ENCODE measurements at regions of chr9 and their contacts with region 1.

Region 1: GRCh38 chr9:137029058-137029936 is 1.3 kb upstream of the ABCA2 start:
- DNase-seq: peak; percentile 50
- H3K4me3 ChIP-seq: peak overlapping the region in 1 of 3 experiments; percentile 57
- H3K27ac ChIP-seq: no peak overlapping the region
- H3K4me1 ChIP-seq: peaks cover 42% of the 10 kb centered on the region
- H3K27me3 ChIP-seq: no peaks in the 10 kb centered on the region
- CTCF ChIP-seq: peak; percentile 88 to 90

Region 2: DNA sequence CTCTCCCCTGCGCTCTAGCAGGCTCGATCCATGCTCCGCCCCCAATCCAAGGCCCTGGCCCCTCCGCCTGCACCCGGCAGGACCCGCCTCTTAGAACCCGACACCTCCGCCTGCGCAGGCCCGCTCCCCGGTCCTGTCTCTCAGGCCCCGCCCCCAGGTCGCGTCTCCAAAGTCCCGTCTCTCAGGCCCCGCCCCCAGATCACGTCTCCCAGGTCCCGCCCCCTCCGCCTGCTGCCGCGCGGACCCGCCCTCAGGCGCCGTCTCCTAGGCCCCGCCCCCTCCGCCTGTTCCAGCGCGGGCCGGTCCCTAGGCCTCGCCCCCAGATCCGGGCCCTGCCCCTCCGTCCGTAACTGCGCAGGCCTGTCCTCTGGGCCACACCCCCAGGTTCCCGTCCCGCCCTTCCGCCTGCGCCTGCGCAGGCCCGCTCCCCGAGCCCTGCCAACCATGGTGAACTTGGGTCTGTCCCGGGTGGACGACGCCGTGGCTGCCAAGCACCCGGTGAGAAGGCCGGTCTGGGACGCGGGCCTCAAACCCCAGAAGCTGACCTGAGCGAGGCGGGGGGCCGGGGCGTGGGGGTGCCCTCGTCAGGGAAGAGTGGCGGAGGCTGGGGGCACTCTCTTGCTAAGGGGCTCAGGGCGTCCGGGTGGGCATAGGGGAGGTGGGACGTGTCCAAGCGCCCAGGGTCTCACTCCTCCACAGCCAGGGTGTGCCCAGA is 238.2 kb before region 1 on chr9 and contains the start of gene TMEM141:
- CTCF ChIA-PET with region 1: no interaction called
- dilution Hi-C with region 1: no loop called
- in situ Hi-C with region 1: loop called (anchors 10 to 25 kb)
- intact Hi-C with region 1: loop called (anchors 1 kb)
- DNase-seq: peak; percentile 98
- H3K4me3 ChIP-seq: peak within 1 kb of the TSS; percentile 72 to 93 (median 77)
- H3K27ac ChIP-seq: peak within 1 kb of the TSS; percentile 88
- H3K4me1 ChIP-seq: peaks cover 18% of the 10 kb centered on the region
- H3K27me3 ChIP-seq: no peaks in the 10 kb centered on the region
- CTCF ChIP-seq: no peak
- total RNA-seq, gene TMEM141: 38.8 to 95.4 TPM

Region 3: GRCh38 chr9:136840140-136840687 is 189.1 kb before region 1 on chr9:
- CTCF ChIA-PET with region 1: no interaction called
- dilution Hi-C with region 1: loop called (anchors 5 kb)
- in situ Hi-C with region 1: no loop called
- intact Hi-C with region 1: no loop called
- DNase-seq: no peak
- H3K4me3 ChIP-seq: no peak overlapping the region
- H3K27ac ChIP-seq: no peak overlapping the region
- H3K4me1 ChIP-seq: peaks cover 25% of the 10 kb centered on the region
- H3K27me3 ChIP-seq: peaks cover 5% of the 10 kb centered on the region
- CTCF ChIP-seq: no peak

Region 4: GRCh38 chr9:136928591-136928990 is 100.7 kb before region 1 on chr9:
- CTCF ChIA-PET with region 1: no interaction called
- dilution Hi-C with region 1: loop called (anchors 5 kb)
- in situ Hi-C with region 1: no loop called
- intact Hi-C with region 1: no loop called
- DNase-seq: no peak
- H3K4me3 ChIP-seq: no peak overlapping the region
- H3K27ac ChIP-seq: no peak overlapping the region
- H3K4me1 ChIP-seq: no peaks in the 10 kb centered on the region
- H3K27me3 ChIP-seq: no peaks in the 10 kb centered on the region
- CTCF ChIP-seq: no peak

Region 5: DNA sequence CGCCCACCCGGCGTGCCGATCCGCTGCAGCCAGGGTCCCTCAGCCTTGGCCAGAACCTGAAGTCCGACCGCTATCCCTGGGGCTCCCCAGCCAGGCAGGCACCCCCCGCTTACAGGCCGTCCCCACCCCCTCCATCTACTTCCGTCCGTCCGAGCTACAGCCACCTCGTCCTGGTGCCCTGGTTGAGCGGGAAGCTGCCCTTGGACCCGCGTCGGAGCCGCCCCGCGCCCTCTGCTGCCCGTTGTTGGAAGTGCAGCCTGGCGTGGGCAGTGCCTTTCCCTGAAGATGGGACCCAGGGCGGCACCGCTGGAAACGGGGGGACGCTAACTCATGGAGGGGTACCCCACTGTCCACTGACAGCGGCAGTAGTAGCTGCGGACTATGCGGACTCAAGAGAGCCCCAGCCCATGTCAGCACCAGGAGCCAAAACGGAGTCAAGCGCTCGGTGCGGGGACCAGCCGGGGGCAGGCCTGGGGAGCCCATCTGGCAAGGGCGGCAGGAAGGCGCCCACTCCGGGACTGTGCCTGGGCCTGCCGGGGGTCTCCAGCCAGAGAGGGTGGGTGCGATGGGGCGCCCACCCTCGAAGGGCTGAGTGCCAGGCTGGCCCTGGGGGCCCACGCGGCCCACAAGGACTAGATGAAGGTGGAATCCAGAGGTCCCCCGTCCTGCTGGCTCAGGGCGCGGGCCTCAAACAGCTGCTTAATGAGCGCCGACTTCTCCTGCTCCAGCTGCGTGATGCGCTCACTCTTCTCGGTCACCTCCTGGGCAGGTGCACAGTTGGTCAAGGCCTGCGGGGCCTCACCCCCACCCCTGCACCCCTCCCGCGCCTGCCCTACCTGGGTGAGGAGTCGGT is 35.0 kb after region 1 on chr9:
- CTCF ChIA-PET with region 1: interaction called, 22 read pairs
- dilution Hi-C with region 1: no loop called
- in situ Hi-C with region 1: no loop called
- intact Hi-C with region 1: no loop called
- DNase-seq: no peak
- H3K4me3 ChIP-seq: no peak overlapping the region
- H3K27ac ChIP-seq: no peak overlapping the region
- H3K4me1 ChIP-seq: peaks cover 42% of the 10 kb centered on the region
- H3K27me3 ChIP-seq: no peaks in the 10 kb centered on the region
- CTCF ChIP-seq: peak; percentile 87 to 94

Region 6: GRCh38 chr9:137156567-137157375 is 127.5 kb after region 1 on chr9:
- CTCF ChIA-PET with region 1: no interaction called
- dilution Hi-C with region 1: loop called (anchors 5 kb)
- in situ Hi-C with region 1: no loop called
- intact Hi-C with region 1: no loop called
- DNase-seq: no peak
- H3K4me3 ChIP-seq: no peak overlapping the region
- H3K27ac ChIP-seq: no peak overlapping the region
- H3K4me1 ChIP-seq: peaks cover 4% of the 10 kb centered on the region
- H3K27me3 ChIP-seq: peaks cover 12% of the 10 kb centered on the region
- CTCF ChIP-seq: no peak

Measured in mammary epithelial cell (primary cell).